Activated CD4-positive, alpha-beta T cell treated with anti-CD3 and anti-CD28 coated beads for 36 hours (primary cell): ENCODE measurements at regions of chr7 and their contacts with region 1.

Region 1: GRCh38 chr7:151782598-151783448 is 94.1 kb downstream of the PRKAG2 start:
- DNase-seq: peak; percentile 84
- ATAC-seq: peak; percentile 91
- H3K4me3 Mint-ChIP-seq: peak overlapping the region; percentile 71
- H3K27ac Mint-ChIP-seq: peak overlapping the region; percentile 86
- H3K4me1 Mint-ChIP-seq: peaks cover 8% of the 10 kb centered on the region
- H3K27me3 Mint-ChIP-seq: no peaks in the 10 kb centered on the region

Region 2: DNA sequence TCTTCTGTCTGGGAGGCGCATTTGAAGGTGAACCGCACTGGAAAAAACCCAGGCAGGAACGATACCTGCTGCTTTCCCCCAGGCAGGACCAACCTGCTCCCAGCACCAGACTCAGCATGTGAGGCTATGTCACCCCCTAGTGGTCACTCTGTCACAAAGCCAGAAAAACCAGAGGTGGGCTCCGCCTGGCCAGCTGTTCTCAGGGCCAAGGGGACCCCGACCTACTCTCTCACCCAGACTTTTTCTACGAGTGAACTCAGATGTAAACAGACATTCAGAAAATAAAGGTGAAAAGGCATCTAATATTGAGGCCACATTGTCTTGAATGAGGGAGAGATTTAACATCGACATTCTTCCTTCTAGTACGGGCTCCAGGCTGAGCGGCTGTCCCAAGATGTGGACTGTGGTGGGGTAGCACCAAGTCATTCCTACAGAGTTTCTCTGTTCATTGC is 23.2 kb before region 1 on chr7:
- CTCF ChIA-PET with region 1: interaction called, 28 read pairs
- POLR2A ChIA-PET with region 1: no interaction called
- intact Hi-C with region 1: no loop called
- DNase-seq: peak; percentile 75
- ATAC-seq: peak; percentile 40
- H3K4me3 Mint-ChIP-seq: no peak overlapping the region
- H3K27ac Mint-ChIP-seq: no peak overlapping the region
- H3K4me1 Mint-ChIP-seq: peaks cover 25% of the 10 kb centered on the region
- H3K27me3 Mint-ChIP-seq: no peaks in the 10 kb centered on the region

Region 3: GRCh38 chr7:151769188-151769841 is 13.5 kb before region 1 on chr7:
- CTCF ChIA-PET with region 1: interaction called, 53 read pairs
- POLR2A ChIA-PET with region 1: interaction called, 3 read pairs
- intact Hi-C with region 1: no loop called
- DNase-seq: peak; percentile 49
- ATAC-seq: peak; percentile 85
- H3K4me3 Mint-ChIP-seq: peak overlapping the region; percentile 40
- H3K27ac Mint-ChIP-seq: peak overlapping the region; percentile 93
- H3K4me1 Mint-ChIP-seq: peaks cover 51% of the 10 kb centered on the region
- H3K27me3 Mint-ChIP-seq: no peaks in the 10 kb centered on the region

Region 4: DNA sequence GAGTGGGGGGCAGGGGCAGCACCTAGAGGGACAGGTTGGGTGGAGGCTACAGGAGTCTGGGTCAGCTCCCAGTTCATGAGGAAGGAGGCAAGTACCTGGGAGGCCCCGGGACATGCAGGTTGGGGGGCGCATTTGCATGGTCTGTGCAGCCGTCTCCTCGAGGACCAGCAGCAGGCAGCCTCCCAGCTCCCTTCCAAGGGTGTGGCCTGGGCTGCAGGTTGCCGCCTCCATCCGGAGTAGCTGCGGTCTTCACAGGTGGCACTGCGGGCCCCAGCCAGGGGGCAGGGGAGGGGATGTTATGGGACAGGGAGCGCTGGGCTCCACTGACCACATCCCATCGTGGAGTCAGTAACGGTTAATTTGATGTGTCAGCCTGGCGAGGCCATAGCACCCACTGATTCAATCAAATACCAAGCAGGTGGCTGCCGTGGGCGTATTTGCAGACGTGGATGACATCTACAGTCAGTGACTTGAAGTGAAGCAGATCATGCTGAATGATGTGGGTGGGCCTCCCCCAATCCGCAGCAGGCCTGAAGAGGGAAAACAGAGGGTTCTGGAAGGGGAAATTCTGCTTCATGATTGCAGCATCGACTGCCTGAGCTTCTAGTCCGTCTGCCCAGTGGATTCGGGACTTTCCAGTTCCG is 12.5 kb after region 1 on chr7:
- CTCF ChIA-PET with region 1: interaction called, 35 read pairs
- POLR2A ChIA-PET with region 1: no interaction called
- intact Hi-C with region 1: no loop called
- DNase-seq: peak; percentile 94
- ATAC-seq: peak; percentile 93
- H3K4me3 Mint-ChIP-seq: no peak overlapping the region
- H3K27ac Mint-ChIP-seq: peak overlapping the region; percentile 67
- H3K4me1 Mint-ChIP-seq: peaks cover 33% of the 10 kb centered on the region
- H3K27me3 Mint-ChIP-seq: no peaks in the 10 kb centered on the region

Region 5: DNA sequence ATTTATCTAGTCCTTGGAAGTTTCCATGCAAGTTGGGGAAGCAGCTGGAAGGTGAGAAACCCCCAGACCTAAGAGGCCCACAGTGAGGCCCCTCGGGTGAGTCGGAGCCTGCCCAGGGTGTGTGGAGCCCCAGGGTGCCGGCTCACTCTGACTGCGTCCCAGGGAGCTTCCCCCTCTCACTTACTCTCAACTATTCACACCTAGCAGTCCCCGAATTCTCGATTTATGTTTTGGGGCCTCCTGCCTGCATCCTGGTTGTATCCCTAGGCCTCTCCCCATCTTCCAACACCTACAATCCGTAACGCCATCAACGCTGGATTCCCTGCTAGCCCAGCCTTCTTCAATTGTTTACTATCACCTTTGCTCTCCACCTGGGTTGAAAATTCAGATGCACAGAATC is 30.1 kb after region 1 on chr7:
- CTCF ChIA-PET with region 1: interaction called, 5 read pairs
- POLR2A ChIA-PET with region 1: interaction called, 3 read pairs
- intact Hi-C with region 1: loop called in 1 of 2 experiments (anchors 1 kb)
- DNase-seq: no peak
- ATAC-seq: no peak
- H3K4me3 Mint-ChIP-seq: no peak overlapping the region
- H3K27ac Mint-ChIP-seq: no peak overlapping the region
- H3K4me1 Mint-ChIP-seq: peaks cover 17% of the 10 kb centered on the region
- H3K27me3 Mint-ChIP-seq: no peaks in the 10 kb centered on the region

Region 6: GRCh38 chr7:151936207-151936606 is 153.4 kb after region 1 on chr7:
- CTCF ChIA-PET with region 1: no interaction called
- POLR2A ChIA-PET with region 1: no interaction called
- intact Hi-C with region 1: loop called (anchors 2 to 10 kb)
- DNase-seq: no peak
- ATAC-seq: peak; percentile 88
- H3K4me3 Mint-ChIP-seq: peak overlapping the region; percentile 43
- H3K27ac Mint-ChIP-seq: peak overlapping the region; percentile 84
- H3K4me1 Mint-ChIP-seq: peaks cover 23% of the 10 kb centered on the region
- H3K27me3 Mint-ChIP-seq: no peaks in the 10 kb centered on the region

Region 7: DNA sequence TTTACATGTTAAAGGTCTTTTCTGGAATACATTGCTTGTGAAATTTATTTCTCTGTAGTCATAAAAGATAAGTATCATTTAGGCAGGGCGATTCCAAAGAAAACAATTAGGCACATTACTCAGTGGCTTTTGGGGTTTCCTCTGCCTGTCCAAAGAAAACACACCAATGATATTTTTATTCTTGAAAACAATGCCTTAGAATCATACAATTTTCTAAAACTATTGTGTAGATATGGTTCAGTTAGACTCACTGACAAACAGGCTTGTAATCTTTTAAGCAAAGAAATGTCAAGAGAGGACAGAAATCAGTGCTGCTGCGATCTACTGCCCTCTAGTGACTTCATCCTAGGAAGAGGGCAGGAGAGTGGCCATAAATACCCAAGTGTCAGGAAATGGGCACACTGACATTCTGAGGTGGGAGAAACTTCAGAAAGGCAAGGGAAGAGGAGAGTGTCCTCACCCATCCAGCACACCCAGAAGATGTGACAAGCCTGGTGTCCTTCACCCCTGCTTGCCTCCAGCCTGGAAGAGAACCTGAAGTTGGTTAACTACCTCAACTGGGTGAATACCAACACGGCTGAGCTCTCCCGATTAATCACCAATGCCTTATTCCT is 363.1 kb after region 1 on chr7:
- CTCF ChIA-PET with region 1: interaction called, 6 read pairs
- POLR2A ChIA-PET with region 1: no interaction called
- intact Hi-C with region 1: loop called in 1 of 2 experiments (anchors 2 kb)
- DNase-seq: peak; percentile 52
- ATAC-seq: peak; percentile 43
- H3K4me3 Mint-ChIP-seq: no peak overlapping the region
- H3K27ac Mint-ChIP-seq: peak overlapping the region; percentile 93
- H3K4me1 Mint-ChIP-seq: peaks cover 48% of the 10 kb centered on the region
- H3K27me3 Mint-ChIP-seq: no peaks in the 10 kb centered on the region